Activated T-helper 2 cell treated with anti-CD3 and anti-CD28 coated beads, Interferon-gamma antibody, Interleukin-2, Interleukin-4, amounts not matched to agents 10 μg/mL and 5 μg/mL and 100 μg/mL, durations not matched to agents 14 hours and 24 hours and 36 hours (primary cell): ENCODE measurements at regions of chr5 and their contacts with region 1.

Region 1: DNA sequence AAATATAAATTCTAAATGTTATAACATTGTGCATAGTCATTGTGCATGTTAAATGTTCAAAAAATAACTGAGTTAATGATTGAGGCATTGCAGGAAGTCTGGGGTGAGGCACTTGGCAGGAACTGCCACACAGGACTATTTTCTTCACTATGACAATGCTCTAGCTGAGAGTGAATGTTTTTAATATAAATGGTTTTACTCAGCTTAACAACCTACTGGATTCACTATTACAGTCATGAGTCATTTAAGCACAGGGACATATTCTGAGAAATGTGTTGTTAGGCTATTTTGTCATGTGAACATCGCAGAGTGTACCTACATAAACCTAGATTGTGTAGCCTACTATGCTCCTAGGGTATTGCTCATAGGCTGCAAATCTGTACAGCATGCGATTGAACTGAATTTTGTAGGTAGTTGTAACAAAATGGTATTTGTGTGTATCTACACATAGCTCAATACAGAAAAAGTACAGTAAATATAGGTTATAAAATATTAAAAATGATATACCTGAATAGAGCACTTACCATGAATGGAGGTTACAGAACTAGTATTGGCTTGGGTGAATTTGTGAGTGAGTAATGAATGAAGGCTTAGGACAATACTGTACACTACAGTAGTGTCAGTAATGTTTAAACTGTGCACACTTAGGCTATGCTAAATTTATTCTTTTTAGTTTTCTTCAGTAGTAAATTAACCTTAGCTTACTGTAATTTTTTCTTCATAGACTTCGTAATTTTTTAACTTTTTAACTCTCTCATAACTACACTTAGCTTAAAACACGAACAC is 346.1 kb upstream of the PTGER4 start:
- DNase-seq: no peak
- H3K4me3 Mint-ChIP-seq: no peak overlapping the region
- H3K27ac Mint-ChIP-seq: peak overlapping the region; percentile 43
- H3K4me1 Mint-ChIP-seq: peaks cover 43% of the 10 kb centered on the region
- H3K27me3 Mint-ChIP-seq: no peaks in the 10 kb centered on the region

Region 2: DNA sequence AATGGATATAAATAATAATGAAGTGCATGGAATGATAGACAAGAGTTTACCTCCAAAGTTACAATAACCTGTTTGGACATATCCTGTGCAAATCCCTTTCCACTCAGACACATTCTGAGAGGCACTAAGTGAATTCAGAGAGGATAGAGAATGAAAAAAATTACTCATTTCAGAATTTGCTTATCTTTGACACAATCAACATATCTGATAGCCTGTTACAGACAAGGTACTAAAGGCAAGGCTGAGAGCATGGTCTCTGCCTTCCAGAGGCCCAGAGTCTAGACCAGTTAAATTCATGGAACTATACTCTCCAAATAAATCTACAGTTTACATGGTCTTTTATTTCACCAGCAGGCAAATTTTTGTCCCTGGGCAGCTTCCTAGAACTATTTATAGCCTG is 25.7 kb before region 1 on chr5:
- intact Hi-C with region 1: loop called (anchors 1 kb)
- DNase-seq: no peak
- H3K4me3 Mint-ChIP-seq: no peak overlapping the region
- H3K27ac Mint-ChIP-seq: no peak overlapping the region
- H3K4me1 Mint-ChIP-seq: peaks cover 19% of the 10 kb centered on the region
- H3K27me3 Mint-ChIP-seq: no peaks in the 10 kb centered on the region

Region 3: DNA sequence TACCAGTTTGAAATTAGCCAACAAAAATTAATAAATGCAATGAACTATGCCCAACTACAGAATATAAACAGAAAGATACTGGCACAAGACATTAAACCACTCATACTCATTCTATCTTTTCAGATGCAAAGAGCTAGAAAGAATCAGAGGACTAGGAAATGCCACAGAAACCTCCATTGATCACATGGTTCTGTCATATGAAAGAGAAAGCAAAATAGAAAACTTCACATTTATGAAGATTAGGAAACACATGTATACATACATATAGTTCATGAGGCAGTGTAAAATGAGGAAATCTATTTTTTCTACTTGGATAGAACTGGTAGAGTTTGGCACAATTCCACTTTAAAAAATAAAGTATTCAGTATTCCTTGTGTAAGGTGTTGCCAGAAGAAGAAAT is 71.0 kb after region 1 on chr5:
- intact Hi-C with region 1: loop called (anchors 5 kb)
- DNase-seq: no peak
- H3K4me3 Mint-ChIP-seq: peak overlapping the region; percentile 37
- H3K27ac Mint-ChIP-seq: peak overlapping the region; percentile 84
- H3K4me1 Mint-ChIP-seq: peaks cover 77% of the 10 kb centered on the region
- H3K27me3 Mint-ChIP-seq: no peaks in the 10 kb centered on the region

Region 4: GRCh38 chr5:40486437-40487275 is 153.0 kb after region 1 on chr5:
- intact Hi-C with region 1: loop called (anchors 1 kb)
- DNase-seq: peak; percentile 64
- H3K4me3 Mint-ChIP-seq: peak overlapping the region; percentile 19
- H3K27ac Mint-ChIP-seq: peak overlapping the region; percentile 75
- H3K4me1 Mint-ChIP-seq: peaks cover 78% of the 10 kb centered on the region
- H3K27me3 Mint-ChIP-seq: no peaks in the 10 kb centered on the region